Heart left ventricle (tissue), 16 donors: ENCODE measurements at regions of chr1 and their contacts with region 1.

Region 1: DNA sequence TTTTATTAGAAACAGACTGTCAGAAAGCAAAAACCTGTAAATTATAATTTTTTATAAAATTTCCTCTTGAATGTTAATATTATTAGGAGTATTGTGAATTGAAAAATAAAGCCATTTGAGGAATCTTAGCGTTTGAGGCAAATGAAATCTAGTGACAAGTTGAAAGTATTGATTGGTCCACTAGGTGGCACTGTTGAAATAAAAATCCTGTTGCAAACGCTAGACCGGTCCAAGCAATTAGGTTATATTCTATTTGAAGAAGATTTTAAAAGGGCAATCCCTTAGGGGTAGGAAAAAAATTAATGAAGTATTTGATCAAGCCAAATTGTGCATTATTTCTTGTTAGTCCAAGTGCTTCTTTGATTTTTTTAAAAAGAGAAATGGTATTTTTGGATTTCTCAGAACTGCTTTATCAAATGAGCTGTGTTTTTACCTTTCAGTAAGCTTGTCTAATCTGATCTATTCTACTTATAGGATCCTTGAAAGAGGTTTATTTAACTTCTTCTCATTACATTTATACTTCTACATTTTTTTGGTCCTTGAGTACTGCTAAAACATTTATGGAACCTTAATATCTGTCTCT is 57.7 kb downstream of the ATG4C start:
- DNase-seq: peak in 2 of 5 donors; percentile 10 to 19
- ATAC-seq: peak in 2 of 4 donors; percentile 62 to 68
- H3K4me3 ChIP-seq: no peak overlapping the region
- H3K27ac ChIP-seq: no peak overlapping the region
- H3K4me1 ChIP-seq: peaks cover 0 to 11% (median 0%) of the 10 kb centered on the region in 12 donors
- H3K27me3 ChIP-seq: no peaks in the 10 kb centered on the region
- CTCF ChIP-seq: peak; percentile 65 to 80 (median 72)
- POLR2A ChIP-seq: no peak

Region 2: GRCh38 chr1:62856960-62857359 is 15.3 kb after region 1 on chr1:
- intact Hi-C with region 1: no loop called
- DNase-seq: no peak
- ATAC-seq: no peak
- H3K4me3 ChIP-seq: no peak overlapping the region
- H3K27ac ChIP-seq: no peak overlapping the region
- H3K4me1 ChIP-seq: no peaks in the 10 kb centered on the region
- H3K27me3 ChIP-seq: no peaks in the 10 kb centered on the region
- CTCF ChIP-seq: no peak
- POLR2A ChIP-seq: no peak

Region 3: GRCh38 chr1:63148825-63149645 is 307.4 kb after region 1 on chr1:
- intact Hi-C with region 1: loop called in 2 of 10 experiments (anchors 5 to 10 kb)
- DNase-seq: no peak
- ATAC-seq: no peak
- H3K4me3 ChIP-seq: no peak overlapping the region
- H3K27ac ChIP-seq: no peak overlapping the region
- H3K4me1 ChIP-seq: no peaks in the 10 kb centered on the region
- H3K27me3 ChIP-seq: peaks cover 0 to 28% (median 11%) of the 10 kb centered on the region in 9 donors
- CTCF ChIP-seq: peak in 9 of 12 donors; percentile 15 to 55 (median 39)
- POLR2A ChIP-seq: no peak

Region 4: DNA sequence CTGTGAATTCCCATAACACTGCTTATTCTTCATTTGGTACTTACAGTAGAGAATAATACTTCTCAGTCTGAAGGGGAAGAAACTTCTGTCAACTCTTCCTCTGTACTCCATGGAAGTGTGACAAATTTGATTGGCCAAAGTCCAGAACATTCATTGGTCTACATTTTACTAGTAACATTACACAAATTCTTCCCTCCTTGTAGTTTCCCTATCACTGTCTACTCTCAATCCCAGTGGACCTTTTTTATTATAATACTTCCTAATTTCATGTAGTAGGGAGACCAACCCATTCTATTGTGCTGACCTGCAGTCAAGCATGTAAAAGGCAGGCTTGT is 600.4 kb after region 1 on chr1:
- intact Hi-C with region 1: loop called in 4 of 10 experiments (anchors 5 to 10 kb)
- DNase-seq: no peak
- ATAC-seq: no peak
- H3K4me3 ChIP-seq: no peak overlapping the region
- H3K27ac ChIP-seq: no peak overlapping the region
- H3K4me1 ChIP-seq: no peaks in the 10 kb centered on the region
- H3K27me3 ChIP-seq: no peaks in the 10 kb centered on the region
- CTCF ChIP-seq: no peak
- POLR2A ChIP-seq: no peak

Region 5: GRCh38 chr1:63522891-63523728 is 681.4 kb after region 1 on chr1 and contains the starts of genes EFCAB7 and ITGB3BP:
- intact Hi-C with region 1: loop called in 3 of 10 experiments (anchors 5 to 10 kb)
- DNase-seq: peak; percentile 81 to 91 (median 83)
- ATAC-seq: peak; percentile 85 to 96 (median 96)
- H3K4me3 ChIP-seq: peak within 1 kb of the TSS; percentile 44 to 91 (median 71)
- H3K27ac ChIP-seq: peak within 1 kb of the TSS; percentile 41 to 97 (median 90)
- H3K4me1 ChIP-seq: peaks cover 0 to 29% (median 10%) of the 10 kb centered on the region in 12 donors
- H3K27me3 ChIP-seq: no peaks in the 10 kb centered on the region
- CTCF ChIP-seq: no peak
- POLR2A ChIP-seq: peak in 1 of 2 donors; percentile 38
- total RNA-seq, gene EFCAB7: 3.4 to 10.7 (median 7.9) TPM
- total RNA-seq, gene ITGB3BP: 2.0 to 17.2 (median 10.1) TPM

Region 6: GRCh38 chr1:63537940-63538339 is 696.3 kb after region 1 on chr1:
- intact Hi-C with region 1: loop called in 3 of 10 experiments (anchors 5 to 10 kb)
- DNase-seq: no peak
- ATAC-seq: no peak
- H3K4me3 ChIP-seq: no peak overlapping the region
- H3K27ac ChIP-seq: no peak overlapping the region
- H3K4me1 ChIP-seq: no peaks in the 10 kb centered on the region
- H3K27me3 ChIP-seq: no peaks in the 10 kb centered on the region
- CTCF ChIP-seq: peak; percentile 9 to 53 (median 34)
- POLR2A ChIP-seq: no peak